Breast epithelium (tissue), 4 donors: ENCODE measurements at regions of chr5 and their contacts with region 1.

Region 1: GRCh38 chr5:123047706-123048105 is 11.2 kb upstream of the PPIC start:
- DNase-seq: no peak
- H3K4me3 ChIP-seq: no peak overlapping the region
- H3K27ac ChIP-seq: no peak overlapping the region
- H3K4me1 ChIP-seq: no peaks in the 10 kb centered on the region
- H3K27me3 ChIP-seq: no peaks in the 10 kb centered on the region
- CTCF ChIP-seq: no peak
- POLR2A ChIP-seq: no peak

Region 2: GRCh38 chr5:122985954-122986721 is 61.6 kb before region 1 on chr5:
- intact Hi-C with region 1: loop called (anchors 2 kb)
- DNase-seq: no peak
- H3K4me3 ChIP-seq: no peak overlapping the region
- H3K27ac ChIP-seq: no peak overlapping the region
- H3K4me1 ChIP-seq: no peaks in the 10 kb centered on the region
- H3K27me3 ChIP-seq: no peaks in the 10 kb centered on the region
- CTCF ChIP-seq: no peak
- POLR2A ChIP-seq: no peak

Region 3: GRCh38 chr5:122999945-123000563 is 47.7 kb before region 1 on chr5:
- intact Hi-C with region 1: no loop called
- DNase-seq: no peak
- H3K4me3 ChIP-seq: no peak overlapping the region
- H3K27ac ChIP-seq: no peak overlapping the region
- H3K4me1 ChIP-seq: no peaks in the 10 kb centered on the region
- H3K27me3 ChIP-seq: no peaks in the 10 kb centered on the region
- CTCF ChIP-seq: no peak
- POLR2A ChIP-seq: no peak